AG04449 (cell line): ENCODE measurements at regions of chr7 and their contacts with region 1.

Region 1: DNA sequence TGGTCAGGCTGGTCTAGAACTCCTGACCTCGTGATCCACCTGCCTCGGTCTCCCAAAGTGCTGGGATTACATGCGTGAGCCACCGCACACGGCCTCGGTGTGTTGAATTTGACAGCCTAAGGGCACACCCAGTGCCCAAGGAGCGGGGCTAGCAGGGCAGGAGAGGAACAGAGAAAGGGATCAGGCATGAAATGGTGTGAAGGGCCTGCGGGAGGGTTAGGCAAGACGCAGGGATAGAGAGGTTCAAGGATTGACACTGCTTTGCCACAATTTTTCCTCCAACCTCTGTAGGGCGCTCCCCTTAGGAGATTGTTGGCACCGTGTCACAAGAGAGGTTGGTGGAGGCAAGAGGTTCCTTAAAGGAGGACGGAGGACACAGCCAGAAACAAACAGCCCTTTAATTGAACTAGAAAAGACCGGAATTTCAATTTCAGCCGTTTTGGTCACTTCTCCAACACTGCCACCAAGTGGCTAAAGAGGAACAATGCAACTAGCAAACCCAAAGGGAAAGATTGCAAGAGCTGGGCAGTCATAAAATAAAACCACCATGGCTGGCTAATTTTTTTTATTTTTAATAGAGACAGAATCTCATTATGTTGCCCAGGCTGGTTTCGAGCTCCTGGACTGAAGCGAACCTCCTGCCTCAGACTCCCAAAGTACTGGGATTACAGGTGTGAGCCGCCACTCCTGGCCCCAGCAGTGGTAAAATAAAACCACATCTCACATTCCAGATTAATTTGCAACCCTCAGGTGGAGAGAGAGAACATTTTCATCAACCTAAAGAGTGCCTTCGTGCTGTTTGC is 6.9 kb upstream of the CREB3L2 start:
- DNase-seq: no peak
- H3K4me3 ChIP-seq: no peak overlapping the region
- CTCF ChIP-seq: peak; percentile 66

Region 2: DNA sequence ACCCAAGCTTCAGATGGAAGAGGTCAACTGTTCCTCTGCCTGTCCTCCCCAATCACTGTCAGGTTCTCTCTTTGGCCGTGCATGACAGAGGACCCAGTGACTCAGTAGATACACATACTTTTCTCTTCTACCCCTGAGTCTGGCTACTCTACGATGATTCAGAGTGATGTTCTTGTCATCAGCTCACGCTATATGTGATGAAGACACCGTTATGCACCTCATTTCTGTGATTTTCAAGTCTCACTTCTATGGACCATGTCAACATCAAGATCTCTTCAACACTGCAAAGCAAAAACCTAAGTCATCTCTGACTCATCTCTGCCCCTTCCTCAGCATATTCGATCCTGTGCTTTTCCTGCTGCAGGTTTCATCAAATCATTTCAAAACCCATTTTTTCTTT is 85.4 kb before region 1 on chr7:
- CTCF ChIA-PET with region 1: interaction called, 831 read pairs
- POLR2A ChIA-PET with region 1: no interaction called
- DNase-seq: peak; percentile 68
- H3K4me3 ChIP-seq: no peak overlapping the region
- CTCF ChIP-seq: no peak

Region 3: GRCh38 chr7:138137423-138138171 is 128.8 kb after region 1 on chr7:
- CTCF ChIA-PET with region 1: no interaction called
- POLR2A ChIA-PET with region 1: no interaction called
- DNase-seq: no peak
- H3K4me3 ChIP-seq: no peak overlapping the region
- CTCF ChIP-seq: no peak